Transverse colon (tissue), 4 donors: ENCODE measurements at regions of chr13 and their contacts with region 1.

Region 1: GRCh38 chr13:80454245-80454644 is 113.3 kb upstream of the SPRY2 start:
- DNase-seq: no peak
- H3K4me3 ChIP-seq: no peak overlapping the region
- H3K27ac ChIP-seq: no peak overlapping the region
- H3K4me1 ChIP-seq: no peaks in the 10 kb centered on the region
- H3K27me3 ChIP-seq: no peaks in the 10 kb centered on the region
- CTCF ChIP-seq: no peak
- EP300 ChIP-seq: no peak
- POLR2A ChIP-seq: no peak

Region 2: DNA sequence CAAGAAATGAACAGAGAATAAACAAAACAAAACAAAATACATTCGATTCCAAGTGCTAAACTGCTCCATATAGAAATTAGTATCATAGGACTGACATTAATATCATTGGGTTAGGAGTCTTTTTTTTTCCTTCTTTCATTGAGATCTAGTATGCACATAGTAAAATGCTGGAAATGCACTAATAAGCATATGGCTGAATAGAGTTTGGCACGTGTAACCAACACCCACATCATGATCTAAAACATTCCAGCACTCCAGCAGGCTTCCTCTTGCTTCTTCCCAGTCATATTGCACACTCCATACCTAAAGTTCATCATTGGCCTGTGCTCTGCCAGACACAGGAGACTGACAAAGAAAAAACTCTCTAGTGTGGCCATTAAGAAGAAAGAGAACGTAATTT is 1968.4 kb before region 1 on chr13:
- in situ Hi-C with region 1: no loop called
- intact Hi-C with region 1: no loop called
- DNase-seq: no peak
- H3K4me3 ChIP-seq: no peak overlapping the region
- H3K27ac ChIP-seq: no peak overlapping the region
- H3K4me1 ChIP-seq: no peaks in the 10 kb centered on the region
- H3K27me3 ChIP-seq: no peaks in the 10 kb centered on the region
- CTCF ChIP-seq: no peak
- EP300 ChIP-seq: no peak
- POLR2A ChIP-seq: no peak

Region 3: GRCh38 chr13:80297094-80297493 is 157.2 kb before region 1 on chr13:
- in situ Hi-C with region 1: no loop called
- intact Hi-C with region 1: no loop called
- DNase-seq: no peak
- H3K4me3 ChIP-seq: no peak overlapping the region
- H3K27ac ChIP-seq: no peak overlapping the region
- H3K4me1 ChIP-seq: peaks cover 0 to 4% (median 0%) of the 10 kb centered on the region in 4 donors
- H3K27me3 ChIP-seq: no peaks in the 10 kb centered on the region
- CTCF ChIP-seq: no peak
- EP300 ChIP-seq: no peak
- POLR2A ChIP-seq: no peak

Region 4: GRCh38 chr13:80499536-80500290 is 45.5 kb after region 1 on chr13:
- in situ Hi-C with region 1: no loop called
- intact Hi-C with region 1: no loop called
- DNase-seq: no peak
- H3K4me3 ChIP-seq: no peak overlapping the region
- H3K27ac ChIP-seq: no peak overlapping the region
- H3K4me1 ChIP-seq: no peaks in the 10 kb centered on the region
- H3K27me3 ChIP-seq: no peaks in the 10 kb centered on the region
- CTCF ChIP-seq: no peak
- EP300 ChIP-seq: no peak
- POLR2A ChIP-seq: no peak

Region 5: GRCh38 chr13:80901111-80901510 is 446.9 kb after region 1 on chr13:
- in situ Hi-C with region 1: no loop called
- intact Hi-C with region 1: no loop called
- DNase-seq: no peak
- H3K4me3 ChIP-seq: no peak overlapping the region
- H3K27ac ChIP-seq: no peak overlapping the region
- H3K4me1 ChIP-seq: no peaks in the 10 kb centered on the region
- H3K27me3 ChIP-seq: no peaks in the 10 kb centered on the region
- CTCF ChIP-seq: no peak
- EP300 ChIP-seq: no peak
- POLR2A ChIP-seq: no peak

Region 6: GRCh38 chr13:81377921-81378320 is 923.7 kb after region 1 on chr13:
- in situ Hi-C with region 1: no loop called
- intact Hi-C with region 1: loop called (anchors 10 kb)
- DNase-seq: no peak
- H3K4me3 ChIP-seq: no peak overlapping the region
- H3K27ac ChIP-seq: no peak overlapping the region
- H3K4me1 ChIP-seq: peaks cover 0 to 9% (median 0%) of the 10 kb centered on the region in 4 donors
- H3K27me3 ChIP-seq: no peaks in the 10 kb centered on the region
- CTCF ChIP-seq: no peak
- EP300 ChIP-seq: no peak
- POLR2A ChIP-seq: no peak